ENCODE measurements at regions of chr7 and their contacts with region 1.

Region 1: GRCh38 chr7:18906901-18907300 is 210.5 kb downstream of the TWIST1 start:
- DNase-seq: no peak
- H3K4me3 ChIP-seq: no peak overlapping the region
- H3K27ac ChIP-seq: no peak overlapping the region
- H3K4me1 ChIP-seq: no peaks in the 10 kb centered on the region
- H3K27me3 ChIP-seq: no peaks in the 10 kb centered on the region
- CTCF ChIP-seq: no peak

Region 2: GRCh38 chr7:17843041-17843440 is 1063.9 kb before region 1 on chr7:
- intact Hi-C with region 1: no loop called
- DNase-seq: no peak
- H3K4me3 ChIP-seq: no peak overlapping the region
- H3K27ac ChIP-seq: no peak overlapping the region
- H3K4me1 ChIP-seq: no peaks in the 10 kb centered on the region
- H3K27me3 ChIP-seq: no peaks in the 10 kb centered on the region
- CTCF ChIP-seq: no peak

Region 3: DNA sequence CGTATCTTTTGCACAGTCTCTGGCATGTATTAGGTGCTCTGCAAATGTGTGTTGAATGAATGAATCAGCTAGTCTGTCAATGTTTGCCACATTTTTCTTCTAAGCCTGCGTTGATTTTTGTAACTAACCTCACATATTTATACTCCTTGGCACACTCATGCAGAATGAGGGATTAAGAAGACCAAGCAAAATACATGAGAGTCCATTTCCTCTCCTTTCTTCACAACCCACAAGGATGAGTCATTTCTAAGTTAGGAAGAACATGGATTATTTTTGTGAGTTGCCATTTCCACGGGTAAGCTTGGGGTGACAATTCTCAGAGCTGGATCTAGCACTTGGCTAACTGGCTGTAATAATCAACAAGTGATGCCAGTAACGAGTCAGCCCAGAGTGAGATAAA is 51.7 kb after region 1 on chr7:
- intact Hi-C with region 1: loop called (anchors 5 kb)
- DNase-seq: no peak
- H3K4me3 ChIP-seq: no peak overlapping the region
- H3K27ac ChIP-seq: peak overlapping the region in 1 of 2 donors; percentile 6
- H3K4me1 ChIP-seq: peaks cover 0 to 4% of the 10 kb centered on the region in 2 donors
- H3K27me3 ChIP-seq: no peaks in the 10 kb centered on the region
- CTCF ChIP-seq: no peak